ENCODE measurements at regions of chr5 and their contacts with region 1.

Region 1: DNA sequence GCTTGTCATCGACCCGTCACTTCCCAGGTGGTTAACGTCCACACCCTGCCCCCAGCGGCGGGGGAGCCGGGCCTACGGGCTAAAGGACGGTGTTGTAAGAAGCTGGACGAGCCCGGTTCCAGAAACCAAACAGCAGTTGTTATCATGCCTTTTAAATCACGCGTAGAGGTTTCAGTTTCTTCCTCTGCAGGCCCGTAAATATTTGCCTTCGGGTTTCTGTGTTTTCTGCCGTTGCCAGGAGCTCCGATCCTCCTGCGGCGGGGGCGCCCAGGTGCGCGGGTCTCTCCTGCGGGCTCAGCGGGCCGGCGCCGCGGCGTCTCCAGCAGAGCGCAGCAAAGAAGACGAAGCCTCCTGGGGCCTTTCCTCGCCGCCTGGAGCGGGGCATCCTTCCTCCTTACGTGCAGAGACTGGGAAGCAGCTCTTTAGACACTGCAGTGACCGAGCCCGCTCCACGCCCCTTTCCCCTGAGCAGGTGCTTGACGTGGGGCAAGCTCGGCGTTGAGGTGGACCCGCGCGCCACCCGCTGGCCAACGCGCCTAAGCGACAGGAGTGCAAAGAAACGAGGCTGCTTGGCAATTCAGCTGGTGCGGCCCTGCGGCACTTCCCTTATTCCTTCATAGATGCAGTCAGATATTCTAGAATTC is 21.8 kb upstream of the TTC1 start:
- DNase-seq: no peak
- H3K4me3 ChIP-seq: peak overlapping the region; percentile 36
- H3K27me3 ChIP-seq: peaks cover 1% of the 10 kb centered on the region; the same call in 1 of the 2 replicates
- CTCF ChIP-seq: peak; percentile 87

Region 2: DNA sequence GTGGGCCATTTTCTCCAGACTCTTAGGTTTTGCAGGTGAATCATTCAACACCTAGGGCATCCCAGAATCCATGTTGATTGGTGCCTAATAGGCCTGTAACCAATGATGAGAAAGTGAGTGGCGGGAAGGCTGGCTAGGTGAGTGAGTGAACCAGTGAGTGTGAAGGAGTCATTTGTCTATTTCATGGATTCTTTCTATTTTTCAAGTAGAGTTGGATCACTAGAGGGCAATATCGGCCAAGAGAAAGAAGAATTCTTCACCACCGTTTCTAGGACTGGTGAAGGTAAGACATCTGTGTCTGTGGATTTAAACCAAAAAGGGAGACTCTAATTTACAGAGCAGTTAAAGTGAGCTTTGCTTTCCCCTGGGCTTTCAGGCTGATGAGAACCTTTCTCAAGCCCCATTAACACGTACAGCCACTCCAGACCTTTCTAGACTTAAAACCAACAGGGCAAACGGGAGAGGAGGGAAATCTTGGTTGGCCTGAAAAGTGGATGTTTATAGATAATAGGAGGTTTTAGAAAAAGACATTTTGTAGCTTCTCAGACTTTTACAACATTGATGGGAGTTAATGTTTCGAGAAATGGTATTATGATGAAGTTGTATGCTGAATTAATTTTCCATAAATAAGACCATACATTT is 542.6 kb before region 1 on chr5:
- CTCF ChIA-PET with region 1: interaction called, 67 read pairs
- POLR2A ChIA-PET with region 1: no interaction called
- DNase-seq: no peak
- H3K4me3 ChIP-seq: no peak overlapping the region
- H3K27me3 ChIP-seq: no peaks in the 10 kb centered on the region
- CTCF ChIP-seq: peak; percentile 51

Region 3: GRCh38 chr5:159451197-159452052 is 535.7 kb before region 1 on chr5:
- CTCF ChIA-PET with region 1: interaction called, 67 read pairs
- POLR2A ChIA-PET with region 1: no interaction called
- DNase-seq: peak; percentile 88
- H3K4me3 ChIP-seq: no peak overlapping the region
- H3K27me3 ChIP-seq: no peaks in the 10 kb centered on the region
- CTCF ChIP-seq: no peak

Region 4: GRCh38 chr5:159915904-159916840 is 71.0 kb before region 1 on chr5 and contains the start of gene ADRA1B:
- CTCF ChIA-PET with region 1: interaction called, 22 read pairs
- POLR2A ChIA-PET with region 1: no interaction called
- DNase-seq: no peak
- H3K4me3 ChIP-seq: peak within 1 kb of the TSS; percentile 33
- H3K27me3 ChIP-seq: no peaks in the 10 kb centered on the region
- CTCF ChIP-seq: peak; percentile 55
- polyA plus RNA-seq, gene ADRA1B: 1.1 and 2.1 TPM in 2 replicates

Region 5: GRCh38 chr5:159965031-159965837 is 21.9 kb before region 1 on chr5:
- CTCF ChIA-PET with region 1: interaction called, 13 read pairs
- POLR2A ChIA-PET with region 1: no interaction called
- DNase-seq: no peak
- H3K4me3 ChIP-seq: no peak overlapping the region
- H3K27me3 ChIP-seq: no peaks in the 10 kb centered on the region
- CTCF ChIP-seq: peak; percentile 73

Region 6: GRCh38 chr5:159975462-159976019 is 11.6 kb before region 1 on chr5:
- CTCF ChIA-PET with region 1: interaction called, 32 read pairs
- POLR2A ChIA-PET with region 1: interaction called, 3 read pairs
- DNase-seq: peak; percentile 89
- H3K4me3 ChIP-seq: no peak overlapping the region
- H3K27me3 ChIP-seq: no peaks in the 10 kb centered on the region
- CTCF ChIP-seq: peak; percentile 78

Region 7: DNA sequence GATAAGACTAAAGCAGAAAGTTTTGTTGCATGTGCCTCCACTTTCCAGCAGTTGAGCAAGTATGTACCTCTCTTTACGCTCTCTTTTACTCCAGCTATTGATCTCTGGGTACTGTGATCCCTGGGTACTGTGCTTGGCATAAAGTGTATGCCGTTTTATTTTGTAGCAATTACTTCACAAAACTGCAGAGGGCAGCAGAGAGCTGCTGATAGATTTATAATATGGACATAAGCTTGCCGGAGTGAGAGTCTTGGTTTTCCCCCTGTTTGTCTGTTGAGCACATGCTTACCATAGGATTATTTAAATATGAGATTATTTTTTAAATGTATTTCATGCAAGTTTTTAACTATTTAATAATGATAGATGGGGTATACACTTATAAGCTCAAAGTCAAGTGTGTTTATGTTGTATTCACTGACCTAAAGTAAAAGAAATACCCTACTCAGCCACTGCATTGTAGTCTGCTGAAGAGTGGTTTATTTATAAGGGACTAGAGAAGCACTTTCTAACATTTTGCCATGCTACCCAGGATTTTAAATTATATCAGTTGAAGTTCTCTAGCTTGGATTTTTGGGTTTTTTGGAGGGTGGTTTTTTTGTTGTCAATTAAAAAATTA is 34.8 kb after region 1 on chr5:
- CTCF ChIA-PET with region 1: no interaction called
- POLR2A ChIA-PET with region 1: no interaction called
- DNase-seq: no peak
- H3K4me3 ChIP-seq: no peak overlapping the region
- H3K27me3 ChIP-seq: no peaks in the 10 kb centered on the region
- CTCF ChIP-seq: peak; percentile 69

Measured in BJ (cell line).